ENCODE measurements at regions of chr5 and their contacts with region 1.

Region 1: GRCh38 chr5:122076664-122077365 is 1.2 kb downstream of the LOX start:
- ATAC-seq: peak; percentile 43 to 79 (median 66)
- H3K4me3 ChIP-seq: peak overlapping the region; percentile 36 to 58 (median 41)
- H3K27ac ChIP-seq: no peak overlapping the region
- H3K4me1 ChIP-seq: peaks cover 0 to 4% of the 10 kb centered on the region in 2 donors

Region 2: GRCh38 chr5:121949867-121950266 is 126.9 kb before region 1 on chr5:
- in situ Hi-C with region 1: loop called in 1 of 9 experiments (anchors 25 kb)
- ATAC-seq: peak in 7 of 8 experiments; percentile 44 to 77 (median 54)
- H3K4me3 ChIP-seq: no peak overlapping the region
- H3K27ac ChIP-seq: no peak overlapping the region
- H3K4me1 ChIP-seq: peaks cover 0 to 2% of the 10 kb centered on the region in 2 donors

Region 3: DNA sequence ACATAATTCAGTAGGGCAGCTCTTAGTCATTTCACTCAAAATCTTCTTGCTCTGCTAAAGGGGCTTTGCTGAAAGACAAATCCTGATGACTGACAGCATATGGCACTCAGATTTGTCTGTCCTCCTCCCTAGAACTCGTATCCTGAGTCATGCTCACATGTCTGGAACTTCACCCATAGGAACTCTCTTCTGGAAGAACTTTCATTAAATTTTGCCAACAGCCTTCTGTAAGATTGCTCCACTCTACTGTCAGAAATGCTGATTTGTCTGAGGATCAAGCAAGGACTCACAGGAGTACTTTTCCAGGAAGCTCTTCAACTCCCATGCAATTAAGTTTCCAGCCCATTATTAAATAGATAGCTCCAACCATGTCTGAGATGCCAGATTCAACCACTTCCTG is 638.3 kb after region 1 on chr5:
- in situ Hi-C with region 1: no loop called
- ATAC-seq: peak in 2 of 8 experiments; percentile 96 to 99
- H3K4me3 ChIP-seq: no peak overlapping the region
- H3K27ac ChIP-seq: no peak overlapping the region
- H3K4me1 ChIP-seq: no peaks in the 10 kb centered on the region

Measured in motor neuron (in vitro differentiated cells).